ENCODE measurements at regions of chr9 and their contacts with region 1.

Region 1: DNA sequence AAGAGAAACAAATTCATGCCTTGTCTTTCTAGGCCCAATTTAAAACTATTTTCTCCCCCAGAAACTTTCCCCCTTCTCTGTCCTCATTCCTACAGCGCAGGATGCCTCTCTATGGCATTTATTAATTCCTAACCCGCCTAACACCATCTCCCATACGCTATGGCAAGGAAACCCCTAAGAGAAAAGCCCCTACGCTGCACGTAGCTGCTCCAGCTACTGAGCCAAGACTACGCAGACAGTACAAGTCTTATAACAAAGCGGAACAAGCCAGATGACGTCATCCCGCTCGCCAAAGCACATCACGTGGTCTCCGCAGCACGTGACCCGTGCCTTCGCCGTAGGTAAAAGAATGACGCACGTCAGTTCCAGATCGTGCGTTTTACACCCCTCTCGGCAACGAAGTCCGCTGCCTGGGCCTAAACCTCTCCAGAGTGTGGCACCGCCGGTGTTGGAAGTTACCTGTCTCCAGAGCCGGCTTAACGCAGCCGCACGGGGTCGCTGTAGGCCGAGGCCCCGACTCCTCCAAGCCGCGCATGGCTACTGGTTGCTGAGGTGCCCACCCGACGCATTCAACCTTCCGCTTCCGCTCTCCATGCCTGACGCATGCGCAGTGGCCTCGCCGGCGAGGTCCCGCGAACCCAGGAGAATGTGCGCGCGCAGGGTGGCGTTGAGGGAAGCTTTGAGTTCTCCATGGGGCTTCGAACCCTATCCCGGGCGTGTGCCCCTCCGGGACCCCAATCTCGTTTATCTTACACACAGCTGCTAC is at the start of gene TRMO:
- DNase-seq: peak; percentile 99
- ATAC-seq: peak; percentile 96 to 97
- H3K4me3 ChIP-seq: peak within 1 kb of the TSS; percentile 60
- H3K27ac ChIP-seq: peak within 1 kb of the TSS; percentile 99
- H3K4me1 ChIP-seq: peaks cover 28% of the 10 kb centered on the region
- H3K27me3 ChIP-seq: no peaks in the 10 kb centered on the region
- CTCF ChIP-seq: peak; percentile 61
- total RNA-seq, gene TRMO: 18.8 TPM

Region 2: GRCh38 chr9:98034593-98035546 is 112.7 kb after region 1 on chr9:
- intact Hi-C with region 1: loop called (anchors 10 kb)
- DNase-seq: peak; percentile 84
- ATAC-seq: peak; percentile 90 to 94
- H3K4me3 ChIP-seq: no peak overlapping the region
- H3K27ac ChIP-seq: no peak overlapping the region
- H3K4me1 ChIP-seq: peaks cover 13% of the 10 kb centered on the region
- H3K27me3 ChIP-seq: no peaks in the 10 kb centered on the region
- CTCF ChIP-seq: peak; percentile 86

Measured in lower lobe of right lung (tissue), 2 donors.